ENCODE measurements at regions of chr12 and their contacts with region 1.

Region 1: DNA sequence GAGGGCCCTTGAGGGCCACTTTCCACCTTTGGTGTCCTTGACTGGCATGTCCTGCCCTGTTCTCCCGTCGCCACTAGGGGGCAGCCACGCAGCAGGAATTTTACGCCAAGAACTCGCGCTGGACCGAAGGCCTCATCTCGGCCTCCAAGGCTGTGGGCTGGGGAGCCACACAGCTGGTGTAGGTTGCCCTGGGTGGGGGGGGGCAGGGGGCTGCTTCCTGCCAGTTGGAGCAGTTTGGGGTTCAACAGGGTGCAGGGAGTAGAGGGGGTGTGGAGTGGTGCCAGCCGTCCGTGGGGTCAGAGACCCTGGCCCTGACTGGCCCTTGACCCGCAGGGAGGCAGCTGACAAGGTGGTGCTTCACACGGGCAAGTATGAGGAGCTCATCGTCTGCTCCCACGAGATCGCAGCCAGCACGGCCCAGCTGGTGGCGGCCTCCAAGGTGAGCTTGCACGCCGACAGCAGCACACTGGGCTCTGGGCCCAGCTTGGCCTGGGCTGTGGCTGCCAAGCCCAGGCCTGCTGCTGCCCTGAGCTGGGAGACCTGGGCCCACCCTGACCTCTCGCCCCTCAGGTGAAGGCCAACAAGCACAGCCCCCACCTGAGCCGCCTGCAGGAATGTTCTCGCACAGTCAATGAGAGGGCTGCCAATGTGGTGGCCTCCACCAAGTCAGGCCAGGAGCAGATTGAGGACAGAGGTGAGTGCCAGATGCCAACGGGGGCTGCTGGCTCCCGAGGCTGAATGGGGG is 25.3 kb downstream of the HIP1R start:
- DNase-seq: peak; percentile 87 to 90
- ATAC-seq: peak; percentile 59 to 87 (median 77)
- H3K4me3 ChIP-seq: no peak overlapping the region
- H3K27ac ChIP-seq: peak overlapping the region in 8 of 10 donors; percentile 45 to 76 (median 54)
- H3K4me1 ChIP-seq: peaks cover 3 to 54% (median 45%) of the 10 kb centered on the region in 9 donors
- H3K27me3 ChIP-seq: no peaks in the 10 kb centered on the region
- CTCF ChIP-seq: peak; percentile 84 to 95 (median 88)

Region 2: GRCh38 chr12:122895705-122896636 is 35.5 kb after region 1 on chr12 and contains the start of gene VPS37B:
- intact Hi-C with region 1: loop called in 1 of 10 experiments (anchors 5 kb)
- DNase-seq: peak; percentile 83 to 87
- ATAC-seq: peak; percentile 80 to 92 (median 86)
- H3K4me3 ChIP-seq: peak within 1 kb of the TSS; percentile 49 to 90 (median 76)
- H3K27ac ChIP-seq: peak within 1 kb of the TSS; percentile 14 to 94 (median 89)
- H3K4me1 ChIP-seq: peaks cover 5 to 66% (median 44%) of the 10 kb centered on the region in 9 donors
- H3K27me3 ChIP-seq: no peaks in the 10 kb centered on the region
- CTCF ChIP-seq: peak in 1 of 9 donors; percentile 13
- total RNA-seq, gene VPS37B: 17.6 to 33.2 (median 19.8) TPM